ENCODE measurements at regions of chr9 and their contacts with region 1.

Region 1: DNA sequence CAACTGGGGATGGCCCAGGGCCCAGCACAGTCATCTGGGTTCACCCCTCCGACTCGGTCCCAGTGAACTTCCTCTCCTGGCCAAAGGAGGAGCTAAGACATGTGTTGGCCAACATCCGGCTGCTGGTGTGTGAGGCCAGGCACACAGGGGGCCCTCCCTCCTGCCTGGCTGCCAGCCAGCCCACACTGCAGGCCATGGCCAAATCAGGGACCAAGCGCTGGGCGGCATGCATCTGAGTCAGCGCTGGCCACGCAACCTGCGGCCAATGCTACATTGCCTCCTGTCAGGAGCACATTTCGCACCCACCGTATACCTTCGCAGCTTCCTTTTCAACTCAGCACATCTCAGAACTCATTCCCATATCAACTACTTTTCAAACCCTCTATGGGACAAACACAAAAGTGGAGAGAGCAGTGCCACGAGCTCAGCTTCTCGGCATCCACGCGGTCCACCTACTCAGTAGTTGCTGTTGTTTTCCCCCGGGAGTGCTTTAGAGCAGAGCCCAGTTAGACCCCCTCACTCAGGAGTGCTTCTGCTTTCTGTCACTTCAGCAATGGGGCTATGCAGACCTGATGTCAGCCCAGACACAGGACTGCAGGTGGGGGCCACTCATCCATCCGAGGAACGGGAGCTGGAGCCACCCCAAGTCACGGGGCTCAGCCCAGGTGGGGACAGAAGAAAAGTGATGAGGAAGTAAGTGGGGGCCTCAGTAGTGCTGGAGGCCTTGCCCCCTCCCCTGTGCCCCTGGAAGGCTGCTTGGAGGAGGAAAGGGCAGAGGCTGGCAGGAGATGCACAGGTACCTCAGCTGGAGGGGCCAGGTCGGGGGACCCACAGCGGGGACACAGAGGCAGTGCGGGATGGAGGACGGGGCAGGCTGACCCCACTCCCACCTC is 13.9 kb downstream of the NINJ1 start:
- DNase-seq: peak; percentile 72
- H3K4me3 Mint-ChIP-seq: no peak overlapping the region
- H3K27ac Mint-ChIP-seq: peak overlapping the region; percentile 68
- H3K4me1 Mint-ChIP-seq: peaks cover 17% of the 10 kb centered on the region
- H3K27me3 Mint-ChIP-seq: no peaks in the 10 kb centered on the region

Region 2: GRCh38 chr9:93134015-93134739 is 14.0 kb after region 1 on chr9 and contains the start of gene NINJ1:
- CTCF ChIA-PET with region 1: interaction called, 12 read pairs
- intact Hi-C with region 1: no loop called
- DNase-seq: peak; percentile 96
- H3K4me3 Mint-ChIP-seq: peak within 1 kb of the TSS; percentile 94
- H3K27ac Mint-ChIP-seq: peak within 1 kb of the TSS; percentile 91
- H3K4me1 Mint-ChIP-seq: peaks cover 67% of the 10 kb centered on the region
- H3K27me3 Mint-ChIP-seq: no peaks in the 10 kb centered on the region
- total RNA-seq, gene NINJ1: 93.9 to 96.9 TPM